ENCODE measurements at regions of chr14 and their contacts with region 1.

Region 1: DNA sequence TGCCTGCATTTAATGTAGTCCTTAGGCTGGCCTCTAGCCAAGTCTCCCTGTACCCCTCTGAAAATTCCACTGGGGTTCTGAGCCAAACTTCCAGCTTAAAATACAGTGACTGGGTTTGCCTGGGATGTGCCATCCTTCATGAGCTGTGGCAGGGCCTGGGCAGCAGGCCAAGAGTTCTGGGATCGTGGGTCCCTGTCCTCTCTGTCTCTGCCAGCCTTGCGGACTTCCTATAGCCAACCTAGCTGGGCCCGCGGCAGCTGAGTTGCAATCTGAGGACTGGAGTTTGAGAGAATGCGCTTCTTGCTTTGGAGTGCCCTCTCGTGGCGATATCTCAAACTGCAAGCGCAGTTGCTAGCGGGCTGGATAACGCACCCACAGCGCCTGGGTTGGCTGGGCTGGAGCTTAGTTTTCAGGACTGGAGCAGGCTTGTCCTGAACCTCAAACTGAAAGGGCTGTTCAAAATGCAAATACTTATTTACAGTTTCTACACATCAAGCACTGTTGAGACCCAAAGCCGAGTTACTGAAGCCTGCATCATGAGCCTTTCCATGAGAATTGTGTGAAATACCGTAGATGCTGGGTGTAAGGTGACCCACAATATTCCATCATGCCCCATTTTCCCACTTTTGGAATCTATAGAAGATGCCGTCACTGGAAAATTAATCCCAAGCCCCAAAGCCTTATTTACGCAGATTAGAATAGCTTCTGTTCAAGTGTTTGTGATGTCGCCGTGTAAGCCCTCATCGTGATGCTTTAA is 7.3 kb upstream of the IFI27L2 start:
- H3K4me3 ChIP-seq: no peak overlapping the region
- H3K27ac ChIP-seq: no peak overlapping the region
- H3K4me1 ChIP-seq: no peaks in the 10 kb centered on the region
- CTCF ChIP-seq: peak; percentile 89

Region 2: GRCh38 chr14:94051115-94051514 is 85.6 kb before region 1 on chr14:
- CTCF ChIA-PET with region 1: interaction called, 33 read pairs
- POLR2A ChIA-PET with region 1: no interaction called
- H3K4me3 ChIP-seq: no peak overlapping the region
- H3K27ac ChIP-seq: no peak overlapping the region
- H3K4me1 ChIP-seq: peaks cover 4% of the 10 kb centered on the region; the same call in 1 of the 2 replicates
- CTCF ChIP-seq: peak; percentile 41; the same call in 1 of the 2 replicates

Region 3: DNA sequence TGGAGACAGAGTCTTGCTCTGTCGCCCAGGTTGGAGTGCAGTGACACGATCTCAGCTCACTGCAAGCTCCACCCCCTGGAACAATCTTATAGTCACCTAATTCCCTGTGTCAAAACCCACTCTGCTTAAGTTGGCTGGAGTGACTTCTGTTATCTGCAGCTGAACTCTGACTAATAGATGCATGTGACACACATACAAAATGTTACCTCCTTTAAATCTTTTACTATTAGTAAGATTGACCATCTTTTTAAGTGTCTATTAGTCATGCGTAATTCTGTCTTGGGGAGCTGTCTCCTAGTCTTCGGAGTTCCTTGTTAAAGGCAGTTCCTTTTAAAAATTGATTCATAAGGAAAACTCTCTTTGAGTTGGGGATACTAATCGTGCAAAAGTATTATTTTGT is 48.2 kb before region 1 on chr14:
- CTCF ChIA-PET with region 1: interaction called, 12 read pairs
- POLR2A ChIA-PET with region 1: no interaction called
- H3K4me3 ChIP-seq: no peak overlapping the region
- H3K27ac ChIP-seq: no peak overlapping the region
- H3K4me1 ChIP-seq: no peaks in the 10 kb centered on the region
- CTCF ChIP-seq: no peak

Region 4: DNA sequence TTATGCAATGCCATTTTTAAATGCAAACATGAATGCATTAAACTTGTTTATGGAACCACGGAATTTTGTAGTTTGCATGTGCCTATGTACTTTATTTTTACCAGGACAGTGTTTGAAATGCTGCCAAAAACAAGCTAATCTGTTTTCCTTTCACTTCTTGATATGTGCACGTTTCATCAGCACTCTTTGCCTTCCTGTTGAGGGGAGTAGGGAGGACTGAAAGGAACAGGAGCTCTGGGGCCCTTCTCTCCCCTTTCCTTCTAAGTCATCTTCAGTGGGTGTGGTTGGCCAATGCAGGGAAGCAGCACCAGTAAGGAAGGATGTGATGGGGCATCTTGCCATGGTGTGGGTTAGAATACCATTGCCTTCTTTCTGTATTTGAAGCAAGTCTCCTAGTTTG is 25.2 kb after region 1 on chr14:
- CTCF ChIA-PET with region 1: interaction called, 13 read pairs
- POLR2A ChIA-PET with region 1: no interaction called
- H3K4me3 ChIP-seq: no peak overlapping the region
- H3K27ac ChIP-seq: no peak overlapping the region
- H3K4me1 ChIP-seq: no peaks in the 10 kb centered on the region; the same call in 1 of the 2 replicates
- CTCF ChIP-seq: no peak

Region 5: GRCh38 chr14:94342334-94342934 is 205.7 kb after region 1 on chr14:
- CTCF ChIA-PET with region 1: no interaction called
- POLR2A ChIA-PET with region 1: no interaction called
- H3K4me3 ChIP-seq: no peak overlapping the region
- H3K27ac ChIP-seq: no peak overlapping the region
- H3K4me1 ChIP-seq: no peaks in the 10 kb centered on the region; the same call in 1 of the 2 replicates
- CTCF ChIP-seq: no peak